ENCODE measurements at regions of chr10 and their contacts with region 1.

Region 1: GRCh38 chr10:14648005-14648765 is 126.5 kb downstream of the FAM107B start:
- DNase-seq: peak; percentile 94
- H3K4me3 ChIP-seq: peak overlapping the region; percentile 56
- H3K27ac ChIP-seq: peak overlapping the region; percentile 90
- H3K4me1 ChIP-seq: peaks cover 80% of the 10 kb centered on the region
- CTCF ChIP-seq: no peak

Region 2: DNA sequence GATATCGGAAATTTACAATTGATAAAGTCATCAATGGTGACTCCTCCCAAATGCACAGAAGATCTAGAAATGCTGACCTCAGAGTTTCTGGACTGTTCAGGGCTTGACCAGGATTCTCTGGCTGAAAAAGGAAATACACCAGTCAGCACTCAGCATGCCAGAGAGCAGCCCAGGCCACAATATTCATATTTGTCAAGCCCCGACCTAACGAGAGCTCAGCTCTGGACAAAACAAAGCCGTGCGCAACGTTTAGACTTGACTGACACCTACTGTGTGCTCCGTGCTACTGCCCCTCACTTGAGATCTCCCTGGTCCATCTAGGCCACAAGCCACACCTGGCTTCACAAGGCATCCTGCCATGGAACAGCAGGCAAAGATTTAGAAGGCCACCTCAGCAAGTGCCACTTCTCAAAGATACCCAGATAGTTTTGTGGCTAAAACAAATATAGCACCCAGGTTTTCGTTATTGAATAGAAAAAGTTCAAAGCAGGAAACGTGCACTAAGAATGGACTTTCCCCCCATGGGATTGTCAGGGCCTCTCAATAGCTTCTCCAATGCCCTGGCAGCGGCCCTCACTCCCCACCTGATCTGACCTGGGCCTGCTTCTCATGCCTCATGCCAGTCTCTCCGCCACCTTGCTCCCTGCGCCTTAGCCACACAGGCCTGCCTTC is 91.8 kb before region 1 on chr10:
- CTCF ChIA-PET with region 1: no interaction called
- POLR2A ChIA-PET with region 1: no interaction called
- intact Hi-C with region 1: loop called (anchors 5 kb)
- DNase-seq: peak; percentile 56
- H3K4me3 ChIP-seq: peak overlapping the region; percentile 4
- H3K27ac ChIP-seq: peak overlapping the region; percentile 48
- H3K4me1 ChIP-seq: peaks cover 81% of the 10 kb centered on the region
- CTCF ChIP-seq: peak; percentile 65

Region 3: DNA sequence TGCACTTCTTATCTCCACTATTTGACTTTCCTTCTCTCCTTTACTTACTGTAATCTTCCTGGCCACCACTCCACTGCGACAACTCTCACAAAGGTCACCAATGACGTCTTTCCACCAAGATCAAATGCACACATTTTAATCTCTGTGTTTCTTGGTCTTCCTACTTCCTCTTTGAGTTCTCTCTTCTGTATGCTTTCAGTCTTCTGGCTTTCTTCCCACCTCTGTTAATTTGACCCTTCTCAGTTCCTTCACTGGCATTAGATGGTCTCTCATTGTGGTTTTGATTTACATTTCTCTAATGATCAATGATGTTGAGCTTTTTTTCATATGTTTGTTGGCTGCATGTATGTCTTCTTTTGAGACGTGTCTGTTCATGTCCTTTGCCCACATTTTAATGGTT is 94.6 kb after region 1 on chr10:
- CTCF ChIA-PET with region 1: no interaction called
- POLR2A ChIA-PET with region 1: interaction called, 4 read pairs
- intact Hi-C with region 1: loop called (anchors 2 kb)
- DNase-seq: peak; percentile 73
- H3K4me3 ChIP-seq: peak overlapping the region; percentile 34
- H3K27ac ChIP-seq: peak overlapping the region; percentile 94
- H3K4me1 ChIP-seq: peaks cover 56% of the 10 kb centered on the region
- CTCF ChIP-seq: no peak